ENCODE measurements at regions of chr5 and their contacts with region 1.

Region 1: GRCh38 chr5:59206132-59206581 is 623.3 kb downstream of the RAB3C start:
- DNase-seq: no peak
- H3K4me3 Mint-ChIP-seq: no peak overlapping the region
- H3K27ac Mint-ChIP-seq: no peak overlapping the region
- H3K4me1 Mint-ChIP-seq: peaks cover 25% of the 10 kb centered on the region
- H3K27me3 Mint-ChIP-seq: no peaks in the 10 kb centered on the region

Region 2: GRCh38 chr5:58286741-58287140 is 919.4 kb before region 1 on chr5:
- intact Hi-C with region 1: no loop called
- DNase-seq: no peak
- H3K4me3 Mint-ChIP-seq: no peak overlapping the region
- H3K27ac Mint-ChIP-seq: no peak overlapping the region
- H3K4me1 Mint-ChIP-seq: no peaks in the 10 kb centered on the region
- H3K27me3 Mint-ChIP-seq: peaks cover under 1% of the 10 kb centered on the region

Region 3: DNA sequence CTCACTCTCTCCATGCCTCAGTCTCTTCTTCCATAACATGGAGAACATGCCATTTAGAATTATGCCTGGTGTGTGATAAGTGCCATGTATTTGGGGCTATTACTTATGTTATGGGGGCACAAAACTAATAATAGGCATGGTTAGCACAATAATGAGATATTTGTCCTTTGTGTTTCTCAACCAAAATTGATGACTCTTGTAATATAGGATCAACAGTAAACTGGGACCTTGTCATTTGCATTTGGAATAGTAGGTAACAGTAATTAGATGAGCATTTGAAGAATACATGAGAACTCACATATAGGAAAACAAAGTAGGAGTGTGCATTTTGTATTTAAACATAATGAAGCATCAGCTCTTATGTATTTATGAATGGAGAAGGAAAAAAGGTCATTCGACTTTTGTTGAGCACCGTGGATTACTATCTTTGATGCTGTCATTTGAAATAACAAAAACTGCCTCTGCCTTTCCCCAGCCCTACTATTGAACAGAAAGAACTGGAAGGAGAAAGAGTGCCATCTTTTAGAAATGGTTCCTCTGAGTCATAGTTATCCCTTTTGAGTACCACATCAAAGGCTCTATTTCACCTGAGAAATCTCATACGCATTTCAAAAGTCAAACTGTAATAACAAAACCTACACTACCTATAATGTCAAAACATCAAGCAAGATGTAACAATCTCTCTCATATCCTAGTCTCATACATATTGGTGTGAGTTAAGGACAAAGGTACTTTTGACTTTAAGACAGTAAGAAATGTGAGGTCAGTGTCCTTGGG is 32.2 kb after region 1 on chr5:
- intact Hi-C with region 1: loop called (anchors 1 kb)
- DNase-seq: no peak
- H3K4me3 Mint-ChIP-seq: no peak overlapping the region
- H3K27ac Mint-ChIP-seq: no peak overlapping the region
- H3K4me1 Mint-ChIP-seq: peaks cover 20% of the 10 kb centered on the region
- H3K27me3 Mint-ChIP-seq: peaks cover 22% of the 10 kb centered on the region

Region 4: DNA sequence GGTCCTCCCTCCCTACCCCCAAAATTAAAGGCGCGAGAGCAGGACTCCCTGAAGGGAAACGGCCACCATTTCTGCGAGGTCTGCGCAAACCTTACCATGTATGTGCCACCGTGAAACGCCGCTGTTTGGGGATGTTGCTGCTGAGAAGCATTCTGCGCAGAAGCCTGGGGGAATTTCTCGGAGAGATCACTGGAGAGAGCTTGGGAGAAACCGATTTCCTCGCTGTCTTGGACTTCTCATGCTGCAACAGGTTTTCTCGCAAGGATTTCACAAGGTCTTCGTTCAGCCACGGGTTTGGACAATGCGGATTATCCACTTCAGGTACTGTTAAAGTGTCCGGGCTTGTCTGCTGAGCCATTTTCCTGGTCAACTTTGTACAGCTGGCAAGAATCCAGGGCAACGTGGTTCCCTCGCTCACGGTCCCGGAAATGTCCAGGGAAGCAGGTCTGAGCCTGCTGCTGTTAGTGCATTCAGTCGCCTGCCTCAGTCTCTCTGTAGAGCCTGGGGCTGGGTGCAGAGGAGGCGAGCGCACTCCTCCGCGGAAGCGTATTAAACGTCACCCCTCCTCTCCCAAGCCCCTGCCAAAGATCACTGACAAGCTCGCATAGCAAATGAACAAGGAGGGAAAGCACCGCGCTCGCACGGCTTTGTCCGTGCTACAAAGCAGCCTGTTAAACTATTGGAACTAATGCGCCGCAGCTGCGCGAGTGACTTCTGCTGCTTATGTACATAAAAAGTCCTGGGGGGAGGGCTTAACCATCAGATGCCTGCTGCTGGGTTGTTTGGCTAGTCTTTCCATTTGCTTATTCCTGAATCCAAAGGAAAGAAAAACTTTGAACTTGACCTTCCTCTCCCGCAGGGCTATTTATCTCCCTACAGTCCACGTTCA is 562.2 kb after region 1 on chr5:
- intact Hi-C with region 1: loop called (anchors 10 kb)
- DNase-seq: no peak
- H3K4me3 Mint-ChIP-seq: peak overlapping the region; percentile 84
- H3K27ac Mint-ChIP-seq: peak overlapping the region; percentile 73
- H3K4me1 Mint-ChIP-seq: peaks cover 43% of the 10 kb centered on the region
- H3K27me3 Mint-ChIP-seq: peaks cover 44% of the 10 kb centered on the region

Measured in activated T-helper 2 cell treated with anti-CD3 and anti-CD28 coated beads, Interferon-gamma antibody, Interleukin-2, Interleukin-4, amounts not matched to agents 10 μg/mL and 5 μg/mL and 100 μg/mL, durations not matched to agents 14 hours and 24 hours and 36 hours (primary cell).